ENCODE measurements at regions of chr12 and their contacts with region 1.

Region 1: GRCh38 chr12:46430340-46430948 is 57.9 kb upstream of the SLC38A2 start:
- DNase-seq: peak; percentile 72
- H3K4me3 ChIP-seq: no peak overlapping the region
- H3K27ac ChIP-seq: peak overlapping the region; percentile 83
- H3K4me1 ChIP-seq: peaks cover 58% of the 10 kb centered on the region
- H3K27me3 ChIP-seq: no peaks in the 10 kb centered on the region
- CTCF ChIP-seq: no peak

Region 2: GRCh38 chr12:46386877-46387629 is 43.4 kb before region 1 on chr12:
- CTCF ChIA-PET with region 1: no interaction called
- POLR2A ChIA-PET with region 1: no interaction called
- intact Hi-C with region 1: loop called (anchors 2 kb)
- DNase-seq: peak; percentile 94
- H3K4me3 ChIP-seq: peak overlapping the region; percentile 23
- H3K27ac ChIP-seq: peak overlapping the region; percentile 67
- H3K4me1 ChIP-seq: peaks cover 80% of the 10 kb centered on the region
- H3K27me3 ChIP-seq: no peaks in the 10 kb centered on the region
- CTCF ChIP-seq: no peak

Region 3: GRCh38 chr12:46446645-46447044 is 16.2 kb after region 1 on chr12:
- CTCF ChIA-PET with region 1: no interaction called
- POLR2A ChIA-PET with region 1: interaction called, 10 read pairs
- intact Hi-C with region 1: no loop called
- DNase-seq: peak; percentile 46
- H3K4me3 ChIP-seq: no peak overlapping the region
- H3K27ac ChIP-seq: peak overlapping the region; percentile 10
- H3K4me1 ChIP-seq: peaks cover 83% of the 10 kb centered on the region
- H3K27me3 ChIP-seq: no peaks in the 10 kb centered on the region
- CTCF ChIP-seq: no peak

Region 4: GRCh38 chr12:46473634-46474329 is 43.3 kb after region 1 on chr12:
- CTCF ChIA-PET with region 1: no interaction called
- POLR2A ChIA-PET with region 1: no interaction called
- intact Hi-C with region 1: loop called (anchors 5 kb)
- DNase-seq: peak; percentile 95
- H3K4me3 ChIP-seq: no peak overlapping the region
- H3K27ac ChIP-seq: peak overlapping the region; percentile 89
- H3K4me1 ChIP-seq: peaks cover 37% of the 10 kb centered on the region
- H3K27me3 ChIP-seq: no peaks in the 10 kb centered on the region
- CTCF ChIP-seq: no peak

Region 5: GRCh38 chr12:46499901-46500300 is 69.5 kb after region 1 on chr12:
- CTCF ChIA-PET with region 1: no interaction called
- POLR2A ChIA-PET with region 1: no interaction called
- intact Hi-C with region 1: no loop called
- DNase-seq: no peak
- H3K4me3 ChIP-seq: no peak overlapping the region
- H3K27ac ChIP-seq: no peak overlapping the region
- H3K4me1 ChIP-seq: no peaks in the 10 kb centered on the region
- H3K27me3 ChIP-seq: no peaks in the 10 kb centered on the region
- CTCF ChIP-seq: no peak